MCF 10A (cell line): ENCODE measurements at regions of chr20 and their contacts with region 1.

Region 1: GRCh38 chr20:44576297-44576696 is 6.1 kb upstream of the PKIG start:
- DNase-seq: peak; percentile 53
- H3K4me3 Mint-ChIP-seq: no peak overlapping the region
- H3K27ac Mint-ChIP-seq: no peak overlapping the region
- H3K4me1 Mint-ChIP-seq: peaks cover 27% of the 10 kb centered on the region
- H3K27me3 Mint-ChIP-seq: no peaks in the 10 kb centered on the region
- CTCF ChIP-seq: no peak

Region 2: GRCh38 chr20:44288252-44288651 is 288.0 kb before region 1 on chr20:
- CTCF ChIA-PET with region 1: no interaction called
- POLR2A ChIA-PET with region 1: no interaction called
- intact Hi-C with region 1: no loop called
- DNase-seq: no peak
- H3K4me3 Mint-ChIP-seq: no peak overlapping the region
- H3K27ac Mint-ChIP-seq: no peak overlapping the region
- H3K4me1 Mint-ChIP-seq: no peaks in the 10 kb centered on the region
- H3K27me3 Mint-ChIP-seq: no peaks in the 10 kb centered on the region
- CTCF ChIP-seq: no peak

Region 3: GRCh38 chr20:44495802-44496481 is 80.4 kb before region 1 on chr20:
- CTCF ChIA-PET with region 1: interaction called, 3 read pairs
- POLR2A ChIA-PET with region 1: interaction called, 12 read pairs
- intact Hi-C with region 1: no loop called
- DNase-seq: peak; percentile 95
- H3K4me3 Mint-ChIP-seq: peak overlapping the region; percentile 26
- H3K27ac Mint-ChIP-seq: peak overlapping the region; percentile 84
- H3K4me1 Mint-ChIP-seq: peaks cover 47% of the 10 kb centered on the region
- H3K27me3 Mint-ChIP-seq: no peaks in the 10 kb centered on the region
- CTCF ChIP-seq: no peak

Region 4: DNA sequence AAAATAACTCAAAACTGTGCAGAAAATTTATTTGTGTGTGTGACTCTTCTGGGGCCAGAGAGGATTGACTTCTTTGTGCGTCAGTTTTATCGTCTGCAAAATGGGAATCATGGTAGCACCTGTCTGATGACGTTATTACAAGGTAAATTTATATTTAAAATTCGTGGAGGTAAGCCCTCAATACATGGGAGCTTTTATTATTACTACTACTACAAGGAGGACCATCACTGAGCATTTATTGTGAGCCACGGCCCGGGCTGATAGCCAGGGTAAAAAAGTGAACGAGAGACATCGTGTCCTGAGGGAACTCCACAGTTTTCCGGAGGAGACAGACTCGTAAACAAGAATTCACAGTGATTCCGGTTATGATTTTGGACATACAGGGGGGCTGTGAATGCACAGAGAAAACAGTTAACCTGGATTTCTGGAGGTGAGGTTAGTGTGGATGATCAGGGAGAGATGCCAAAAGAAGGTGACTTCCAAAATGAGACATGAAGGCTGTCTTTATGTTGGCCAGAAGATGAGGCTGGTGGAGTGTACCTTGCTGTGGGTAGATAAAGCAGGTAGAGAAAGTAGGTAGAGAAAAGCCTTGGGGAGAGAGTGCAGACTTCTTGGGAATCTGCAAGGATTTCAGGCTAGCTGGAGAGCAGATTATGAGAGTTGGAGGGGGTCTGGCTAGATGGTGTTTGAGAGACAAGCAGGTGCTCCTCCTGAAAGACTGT is 43.9 kb before region 1 on chr20:
- CTCF ChIA-PET with region 1: interaction called, 4 read pairs
- POLR2A ChIA-PET with region 1: interaction called, 17 read pairs
- intact Hi-C with region 1: no loop called
- DNase-seq: peak; percentile 5
- H3K4me3 Mint-ChIP-seq: no peak overlapping the region
- H3K27ac Mint-ChIP-seq: no peak overlapping the region
- H3K4me1 Mint-ChIP-seq: peaks cover 10% of the 10 kb centered on the region
- H3K27me3 Mint-ChIP-seq: no peaks in the 10 kb centered on the region
- CTCF ChIP-seq: no peak

Region 5: DNA sequence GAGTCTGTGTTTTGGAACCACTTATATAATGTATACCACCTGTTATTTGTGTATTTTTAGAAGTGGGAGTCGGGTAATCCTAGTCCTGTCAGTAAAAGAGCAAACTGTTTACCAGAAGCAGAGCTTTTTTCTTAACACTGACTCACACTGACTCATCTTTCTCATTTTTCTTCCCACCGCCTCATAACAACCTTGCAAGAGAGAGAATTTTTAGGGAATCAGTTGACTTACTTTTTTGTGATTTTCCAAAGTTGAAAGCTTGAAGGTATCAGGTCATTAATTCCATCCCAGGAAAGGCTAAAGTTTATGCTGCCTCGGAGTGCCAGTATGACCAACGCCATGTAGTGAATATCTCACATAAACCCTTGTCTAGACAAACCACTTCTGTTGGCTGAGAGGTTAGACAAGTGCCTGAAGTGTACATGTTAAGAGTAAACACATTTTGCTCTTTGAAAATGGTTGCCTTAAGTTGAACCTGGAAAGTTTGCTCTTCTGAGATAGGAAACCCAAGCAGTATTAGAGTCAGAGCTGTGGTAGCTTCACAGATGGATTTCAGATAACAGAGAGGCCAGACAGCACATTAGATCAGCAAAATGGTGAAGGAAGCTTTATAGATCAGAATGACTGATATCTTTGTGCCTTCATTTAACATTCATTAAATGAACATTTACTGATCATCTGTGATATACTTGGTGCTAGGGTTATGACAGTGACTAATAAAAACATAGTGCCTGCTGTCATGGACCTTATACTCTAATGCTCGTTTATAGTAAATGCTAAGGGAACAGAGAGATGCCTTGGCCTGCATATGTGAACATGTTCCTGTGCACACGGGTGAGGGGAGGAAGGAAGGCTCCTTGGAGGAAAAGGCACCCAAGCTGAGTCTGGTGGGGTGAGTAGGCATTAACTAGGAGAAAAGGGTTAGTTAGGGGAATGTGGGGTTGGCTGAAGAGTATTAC is 23.1 kb before region 1 on chr20:
- CTCF ChIA-PET with region 1: interaction called, 7 read pairs
- POLR2A ChIA-PET with region 1: interaction called, 26 read pairs
- intact Hi-C with region 1: no loop called
- DNase-seq: peak; percentile 71
- H3K4me3 Mint-ChIP-seq: no peak overlapping the region
- H3K27ac Mint-ChIP-seq: peak overlapping the region; percentile 81
- H3K4me1 Mint-ChIP-seq: peaks cover 22% of the 10 kb centered on the region
- H3K27me3 Mint-ChIP-seq: no peaks in the 10 kb centered on the region
- CTCF ChIP-seq: no peak